MCF 10A (cell line): ENCODE measurements at regions of chr17 and their contacts with region 1.

Region 1: DNA sequence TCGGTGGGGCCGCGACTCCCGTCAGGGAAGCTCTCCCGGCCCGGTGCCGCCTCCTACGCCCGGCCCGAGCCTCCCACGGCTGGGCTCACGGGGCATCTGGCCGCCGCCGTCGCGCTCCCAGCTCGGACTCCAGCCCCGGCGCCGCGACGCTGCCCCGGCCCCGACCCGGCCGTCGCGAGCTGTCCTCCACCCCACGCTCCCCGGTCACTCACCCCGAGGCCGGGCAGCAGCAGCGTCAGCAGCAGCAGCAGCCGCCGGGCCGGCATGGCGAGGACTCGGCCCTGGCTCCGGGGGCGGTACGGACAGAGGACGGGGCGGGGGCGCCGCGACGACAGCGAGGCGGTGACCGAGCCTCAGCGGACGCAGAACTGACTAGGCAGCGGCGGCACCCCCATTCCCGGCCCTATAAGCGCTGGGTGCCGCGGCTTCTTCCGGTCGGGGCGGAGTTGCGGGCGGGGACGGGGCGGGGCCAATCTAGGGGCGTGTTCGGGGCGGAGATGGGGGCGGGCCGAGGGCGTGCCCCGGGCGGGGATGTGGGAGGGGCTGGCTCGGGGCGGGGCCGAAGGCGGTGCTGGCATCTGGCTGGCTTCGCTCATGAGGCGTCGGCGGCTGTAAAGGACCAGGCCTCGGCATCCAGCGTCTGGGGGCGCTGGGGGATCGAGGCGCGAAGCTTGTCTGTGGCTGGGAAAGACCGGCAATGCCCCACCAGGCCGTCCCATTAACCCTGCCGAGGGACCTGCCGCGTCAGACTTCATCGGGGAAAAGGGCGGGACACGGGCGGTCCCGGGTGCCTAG is at the start of gene ERN1:
- DNase-seq: peak; percentile 93
- H3K4me3 Mint-ChIP-seq: peak within 1 kb of the TSS; percentile 94
- H3K27ac Mint-ChIP-seq: peak within 1 kb of the TSS; percentile 93
- H3K4me1 Mint-ChIP-seq: peaks cover 18% of the 10 kb centered on the region
- H3K27me3 Mint-ChIP-seq: no peaks in the 10 kb centered on the region
- CTCF ChIP-seq: no peak
- total RNA-seq, gene ERN1: 79.5 and 87.0 TPM in 2 replicates

Region 2: DNA sequence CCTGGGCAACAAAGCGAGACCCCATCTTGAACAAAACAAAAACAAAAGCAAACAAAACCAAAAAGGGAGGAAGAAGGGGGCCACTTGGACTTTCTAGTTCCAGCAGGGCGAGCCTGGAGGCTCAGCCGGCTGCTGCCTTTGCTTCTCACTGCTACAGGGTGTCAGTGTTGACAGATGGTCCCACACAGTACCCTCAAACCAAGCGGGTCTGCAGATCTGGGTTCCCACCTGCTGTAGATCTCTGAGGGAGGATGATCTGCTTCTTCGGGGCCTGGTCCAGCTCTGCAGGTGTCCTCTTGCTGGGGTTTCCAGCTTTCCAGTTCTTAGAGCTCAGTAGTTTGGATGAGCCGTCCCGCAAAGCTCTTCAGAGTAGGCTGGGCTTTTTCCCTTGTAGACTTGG is 225.6 kb before region 1 on chr17:
- CTCF ChIA-PET with region 1: interaction called, 11 read pairs
- POLR2A ChIA-PET with region 1: no interaction called
- intact Hi-C with region 1: no loop called
- DNase-seq: no peak
- H3K4me3 Mint-ChIP-seq: no peak overlapping the region
- H3K27ac Mint-ChIP-seq: no peak overlapping the region
- H3K4me1 Mint-ChIP-seq: peaks cover 4% of the 10 kb centered on the region
- H3K27me3 Mint-ChIP-seq: peaks cover 48% of the 10 kb centered on the region
- CTCF ChIP-seq: no peak

Region 3: DNA sequence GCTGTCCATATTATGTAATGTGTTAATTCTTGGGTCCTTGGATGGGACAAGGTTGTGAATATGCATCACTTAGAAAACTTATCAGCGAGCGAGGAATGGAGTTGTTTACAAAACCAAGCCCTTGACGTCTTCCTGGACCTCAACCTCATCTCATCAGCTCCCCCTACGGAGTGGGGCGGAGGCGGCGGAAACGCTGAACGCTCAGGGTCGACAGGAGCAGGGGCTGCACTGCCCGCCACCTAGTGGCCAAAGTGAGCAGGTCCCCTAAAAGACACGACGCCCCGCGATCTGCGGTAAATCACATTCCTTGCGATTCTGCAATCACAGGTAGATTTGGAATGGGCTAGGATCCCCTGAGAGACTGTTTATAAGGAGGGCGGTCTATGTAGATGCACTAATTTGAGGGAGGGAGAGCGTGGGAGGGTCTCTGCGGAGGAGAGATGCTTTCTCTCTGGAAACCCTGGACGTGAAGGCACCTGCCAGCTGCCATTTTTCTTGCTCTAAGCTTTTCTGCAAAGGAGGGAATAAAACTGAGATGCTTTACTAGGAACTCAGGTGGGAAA is 104.1 kb before region 1 on chr17:
- CTCF ChIA-PET with region 1: interaction called, 350 read pairs
- POLR2A ChIA-PET with region 1: interaction called, 35 read pairs
- intact Hi-C with region 1: loop called (anchors 1 kb)
- DNase-seq: peak; percentile 69
- H3K4me3 Mint-ChIP-seq: peak overlapping the region; percentile 21
- H3K27ac Mint-ChIP-seq: no peak overlapping the region
- H3K4me1 Mint-ChIP-seq: peaks cover 7% of the 10 kb centered on the region
- H3K27me3 Mint-ChIP-seq: no peaks in the 10 kb centered on the region
- CTCF ChIP-seq: peak; percentile 84

Region 4: GRCh38 chr17:64063766-64064224 is 66.2 kb before region 1 on chr17:
- CTCF ChIA-PET with region 1: interaction called, 32 read pairs
- POLR2A ChIA-PET with region 1: interaction called, 3 read pairs
- intact Hi-C with region 1: loop called (anchors 2 kb)
- DNase-seq: peak; percentile 46
- H3K4me3 Mint-ChIP-seq: no peak overlapping the region
- H3K27ac Mint-ChIP-seq: no peak overlapping the region
- H3K4me1 Mint-ChIP-seq: no peaks in the 10 kb centered on the region
- H3K27me3 Mint-ChIP-seq: no peaks in the 10 kb centered on the region
- CTCF ChIP-seq: peak; percentile 19

Region 5: DNA sequence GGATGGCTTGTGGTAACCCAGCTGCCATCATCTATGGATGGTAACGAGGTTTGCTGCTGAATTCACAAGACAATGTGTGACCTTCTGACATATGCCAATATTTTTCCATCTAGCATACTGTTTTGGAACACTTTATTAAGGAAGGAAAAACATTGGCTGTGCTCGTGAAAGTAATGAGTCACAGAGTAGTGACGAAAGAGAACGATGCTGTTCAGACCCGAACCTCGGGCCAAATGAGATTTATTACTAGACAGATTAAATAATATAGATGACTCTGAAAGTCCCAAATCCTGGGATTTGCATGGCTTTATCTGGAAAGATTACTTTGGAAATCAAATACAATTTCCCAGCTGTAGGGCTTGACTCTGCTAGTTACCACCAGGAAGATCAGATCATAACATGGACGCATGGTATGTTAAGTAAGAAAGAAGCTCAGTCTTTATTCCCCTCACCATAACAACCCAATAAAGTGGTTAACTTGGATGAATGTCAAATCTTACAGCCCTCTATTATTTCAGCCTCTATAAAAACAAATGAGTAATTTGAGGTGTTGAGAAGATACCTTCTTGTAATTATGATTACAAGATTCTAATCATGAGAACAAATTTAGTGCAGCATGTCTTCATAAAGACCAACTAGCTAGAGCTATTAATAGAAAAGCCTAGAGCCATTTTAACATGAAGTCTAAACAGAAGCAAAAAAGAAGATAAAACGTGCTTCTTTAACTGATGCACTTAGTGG is 32.6 kb before region 1 on chr17:
- CTCF ChIA-PET with region 1: interaction called, 5 read pairs
- POLR2A ChIA-PET with region 1: interaction called, 16 read pairs
- intact Hi-C with region 1: no loop called
- DNase-seq: peak; percentile 76
- H3K4me3 Mint-ChIP-seq: peak overlapping the region; percentile 54
- H3K27ac Mint-ChIP-seq: peak overlapping the region; percentile 87
- H3K4me1 Mint-ChIP-seq: peaks cover 28% of the 10 kb centered on the region
- H3K27me3 Mint-ChIP-seq: no peaks in the 10 kb centered on the region
- CTCF ChIP-seq: no peak

Region 6: GRCh38 chr17:64174686-64175456 is 44.9 kb after region 1 on chr17:
- CTCF ChIA-PET with region 1: no interaction called
- POLR2A ChIA-PET with region 1: no interaction called
- intact Hi-C with region 1: no loop called
- DNase-seq: peak; percentile 22
- H3K4me3 Mint-ChIP-seq: no peak overlapping the region
- H3K27ac Mint-ChIP-seq: peak overlapping the region; percentile 75
- H3K4me1 Mint-ChIP-seq: peaks cover 25% of the 10 kb centered on the region
- H3K27me3 Mint-ChIP-seq: no peaks in the 10 kb centered on the region
- CTCF ChIP-seq: no peak

Region 7: GRCh38 chr17:64281962-64282727 is 152.2 kb after region 1 on chr17:
- CTCF ChIA-PET with region 1: interaction called, 13 read pairs
- POLR2A ChIA-PET with region 1: interaction called, 4 read pairs
- intact Hi-C with region 1: loop called (anchors 5 kb)
- DNase-seq: peak; percentile 72
- H3K4me3 Mint-ChIP-seq: no peak overlapping the region
- H3K27ac Mint-ChIP-seq: no peak overlapping the region
- H3K4me1 Mint-ChIP-seq: peaks cover 9% of the 10 kb centered on the region
- H3K27me3 Mint-ChIP-seq: no peaks in the 10 kb centered on the region
- CTCF ChIP-seq: peak; percentile 74

Region 8: GRCh38 chr17:64441772-64442540 is 312.0 kb after region 1 on chr17:
- CTCF ChIA-PET with region 1: no interaction called
- POLR2A ChIA-PET with region 1: no interaction called
- intact Hi-C with region 1: no loop called
- DNase-seq: no peak
- H3K4me3 Mint-ChIP-seq: no peak overlapping the region
- H3K27ac Mint-ChIP-seq: no peak overlapping the region
- H3K4me1 Mint-ChIP-seq: peaks cover 5% of the 10 kb centered on the region
- H3K27me3 Mint-ChIP-seq: no peaks in the 10 kb centered on the region
- CTCF ChIP-seq: no peak